Mammary epithelial cell (primary cell): ENCODE measurements at regions of chr3 and their contacts with region 1.

Region 1: DNA sequence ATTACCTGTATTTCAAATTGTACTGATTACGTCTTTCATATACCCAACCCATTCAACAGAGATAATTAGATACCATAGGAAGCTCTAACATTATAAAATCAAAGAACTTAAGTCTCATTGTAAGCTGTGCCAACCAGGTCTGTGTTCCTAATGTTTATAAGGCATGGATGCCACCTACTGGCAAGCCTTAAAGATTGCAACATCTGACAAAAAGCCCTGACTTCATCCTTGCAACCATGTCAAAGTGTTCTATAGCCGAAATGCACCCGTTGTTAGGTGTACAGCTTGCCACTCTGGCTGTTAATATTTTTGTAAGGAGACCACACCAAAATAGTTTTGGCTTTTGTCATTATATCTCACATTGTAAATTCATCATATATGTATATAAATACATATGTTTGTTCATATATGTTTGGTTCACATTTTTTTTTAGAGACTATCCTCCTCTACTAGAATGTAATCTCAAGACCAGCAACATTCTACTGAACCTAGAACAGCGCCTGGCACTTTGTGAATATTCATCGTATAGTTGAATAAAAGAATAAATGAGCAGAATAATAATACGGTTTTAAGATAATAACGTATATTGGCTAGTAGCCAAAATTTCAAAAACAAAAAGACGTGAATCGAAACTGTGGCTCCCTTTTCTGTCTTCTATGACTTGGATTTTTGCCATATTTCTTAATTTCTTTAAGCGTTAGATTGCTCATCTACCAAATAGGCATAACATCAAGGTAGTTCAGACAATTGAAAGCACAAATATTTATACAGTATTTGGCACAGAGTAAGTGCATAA is 258.1 kb downstream of the TBL1XR1 start:
- DNase-seq: peak; percentile 60
- H3K4me3 ChIP-seq: no peak overlapping the region
- H3K27ac ChIP-seq: no peak overlapping the region
- H3K4me1 ChIP-seq: no peaks in the 10 kb centered on the region
- H3K27me3 ChIP-seq: no peaks in the 10 kb centered on the region
- CTCF ChIP-seq: peak; percentile 84 to 88

Region 2: DNA sequence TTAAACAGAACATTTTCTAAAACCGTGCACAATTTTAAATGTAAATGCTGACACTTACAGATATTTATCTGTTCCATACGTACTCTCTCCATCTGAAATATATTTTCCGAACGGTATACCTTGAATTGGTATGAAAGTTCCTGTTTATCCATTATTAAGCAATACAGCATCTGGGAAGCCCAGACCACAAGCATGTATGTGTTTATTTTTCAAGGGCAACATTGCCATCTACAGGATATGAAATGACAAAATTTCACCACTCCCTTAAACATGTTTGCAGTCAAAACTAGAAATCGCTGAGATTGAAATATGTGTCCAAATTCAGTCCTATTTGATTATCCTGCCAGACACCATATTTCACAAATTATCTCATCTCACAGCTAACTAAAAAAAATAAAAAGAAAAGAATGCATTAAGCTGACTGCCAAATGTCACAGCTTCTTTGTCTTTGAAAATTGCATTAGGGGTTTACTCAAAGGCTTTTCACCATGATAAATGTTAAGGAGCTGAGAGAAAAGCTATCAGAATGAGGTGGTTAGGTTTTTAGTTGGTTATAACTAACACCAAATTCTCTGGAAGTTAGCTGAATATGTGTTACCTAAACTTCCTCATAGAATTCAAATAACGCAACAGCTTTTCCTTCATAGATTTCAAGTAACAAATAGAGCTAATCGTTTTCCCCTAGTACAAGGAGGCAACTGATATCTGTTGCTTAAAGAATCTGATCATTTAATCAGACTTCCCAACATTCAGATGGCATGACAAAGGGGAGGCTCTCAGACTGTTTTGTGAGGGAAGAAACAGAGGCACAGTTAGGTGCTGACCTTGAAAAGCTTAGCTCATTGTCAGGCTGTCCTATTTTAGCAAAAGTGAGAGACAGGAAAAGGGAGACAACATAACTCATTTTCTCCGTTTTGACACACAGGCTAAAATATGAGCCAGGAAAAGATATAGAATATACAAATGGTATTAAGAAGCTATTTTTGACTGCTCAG is 275.1 kb before region 1 on chr3:
- CTCF ChIA-PET with region 1: no interaction called
- dilution Hi-C with region 1: no loop called
- in situ Hi-C with region 1: loop called in 1 of 2 experiments (anchors 25 kb)
- intact Hi-C with region 1: loop called (anchors 5 kb)
- DNase-seq: peak; percentile 34
- H3K4me3 ChIP-seq: no peak overlapping the region
- H3K27ac ChIP-seq: no peak overlapping the region
- H3K4me1 ChIP-seq: no peaks in the 10 kb centered on the region
- H3K27me3 ChIP-seq: no peaks in the 10 kb centered on the region
- CTCF ChIP-seq: peak; percentile 16 to 51

Region 3: GRCh38 chr3:176767385-176767784 is 171.8 kb before region 1 on chr3:
- CTCF ChIA-PET with region 1: no interaction called
- dilution Hi-C with region 1: no loop called
- in situ Hi-C with region 1: no loop called
- intact Hi-C with region 1: loop called (anchors 10 kb)
- DNase-seq: peak; percentile 98
- H3K4me3 ChIP-seq: no peak overlapping the region
- H3K27ac ChIP-seq: peak overlapping the region; percentile 79
- H3K4me1 ChIP-seq: peaks cover 19% of the 10 kb centered on the region
- H3K27me3 ChIP-seq: no peaks in the 10 kb centered on the region
- CTCF ChIP-seq: no peak

Region 4: GRCh38 chr3:177069514-177070329 is 130.5 kb after region 1 on chr3:
- CTCF ChIA-PET with region 1: no interaction called
- dilution Hi-C with region 1: no loop called
- in situ Hi-C with region 1: no loop called
- intact Hi-C with region 1: no loop called
- DNase-seq: peak; percentile 40
- H3K4me3 ChIP-seq: no peak overlapping the region
- H3K27ac ChIP-seq: no peak overlapping the region
- H3K4me1 ChIP-seq: no peaks in the 10 kb centered on the region
- H3K27me3 ChIP-seq: no peaks in the 10 kb centered on the region
- CTCF ChIP-seq: no peak

Region 5: GRCh38 chr3:177538750-177539730 is 599.8 kb after region 1 on chr3:
- CTCF ChIA-PET with region 1: no interaction called
- dilution Hi-C with region 1: no loop called
- in situ Hi-C with region 1: no loop called
- intact Hi-C with region 1: no loop called
- DNase-seq: no peak
- H3K4me3 ChIP-seq: no peak overlapping the region
- H3K27ac ChIP-seq: no peak overlapping the region
- H3K4me1 ChIP-seq: peaks cover 5% of the 10 kb centered on the region
- H3K27me3 ChIP-seq: no peaks in the 10 kb centered on the region
- CTCF ChIP-seq: no peak

Region 6: DNA sequence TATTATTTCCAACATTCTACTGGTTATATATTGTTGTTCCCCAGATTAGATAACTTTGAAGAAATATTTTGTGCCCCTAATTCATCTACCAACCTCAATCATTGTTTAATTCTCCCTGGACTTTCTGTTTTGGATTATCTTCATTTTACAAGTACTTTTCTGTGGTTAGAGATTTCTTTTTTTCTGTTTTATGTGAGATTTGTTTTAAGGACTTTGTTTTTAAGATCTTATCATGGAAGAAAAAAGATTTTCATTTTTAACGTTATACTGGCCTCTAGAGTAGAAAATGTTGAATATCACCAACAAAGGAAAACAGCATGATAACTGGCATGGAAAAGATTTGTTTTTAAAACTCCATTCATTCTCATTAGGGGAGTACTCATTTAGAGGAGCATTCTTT is 1386.1 kb after region 1 on chr3:
- CTCF ChIA-PET with region 1: no interaction called
- dilution Hi-C with region 1: no loop called
- in situ Hi-C with region 1: no loop called
- intact Hi-C with region 1: loop called (anchors 5 kb)
- DNase-seq: no peak
- H3K4me3 ChIP-seq: no peak overlapping the region
- H3K27ac ChIP-seq: no peak overlapping the region
- H3K4me1 ChIP-seq: no peaks in the 10 kb centered on the region
- H3K27me3 ChIP-seq: no peaks in the 10 kb centered on the region
- CTCF ChIP-seq: peak; percentile 49 to 56